K562 (cell line): ENCODE measurements at regions of chrX and their contacts with region 1.

Region 1: DNA sequence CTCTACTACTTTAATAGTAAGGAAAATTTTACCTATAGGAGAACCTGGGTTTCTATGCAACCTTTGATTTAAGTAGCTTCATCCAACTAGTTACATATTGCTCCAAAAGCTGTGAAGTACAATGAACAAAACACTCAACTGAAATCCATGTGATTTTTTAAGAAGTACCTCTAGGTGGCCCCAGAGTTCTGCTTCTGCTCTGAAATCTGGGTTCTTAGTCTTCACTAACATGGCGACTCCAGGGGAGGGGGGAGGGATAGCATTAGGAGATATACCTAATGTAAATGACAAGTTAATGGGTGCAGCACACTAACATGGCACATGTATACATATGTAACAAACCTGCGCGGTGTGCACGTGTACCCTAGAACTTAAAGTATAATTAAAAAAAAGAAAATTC is 73.4 kb upstream of the MAGEB2 start:
- DNase-seq: peak; percentile 31 to 55 (median 35)
- ATAC-seq: peak; percentile 84
- H3K4me3 ChIP-seq: no peak overlapping the region
- H3K27ac ChIP-seq: no peak overlapping the region
- H3K4me1 ChIP-seq: peaks cover 0 to 4% of the 10 kb centered on the region in 2 experiments; a peak in 1 of 5 replicates
- H3K27me3 ChIP-seq: no peaks in the 10 kb centered on the region
- CTCF ChIP-seq: peak; percentile 25 to 60 (median 51); a peak in 4 of 6 replicates
- EP300 ChIP-seq: no peak
- POLR2A ChIP-seq: no peak
- RAD21 ChIP-seq: peak; percentile 58 to 71

Region 2: GRCh38 chrX:30181353-30181752 is 39.4 kb after region 1 on chrX:
- CTCF ChIA-PET with region 1: no interaction called
- POLR2A ChIA-PET with region 1: no interaction called
- in situ Hi-C with region 1: no loop called
- intact Hi-C with region 1: no loop called
- DNase-seq: no peak
- ATAC-seq: no peak
- H3K4me3 ChIP-seq: no peak overlapping the region
- H3K27ac ChIP-seq: no peak overlapping the region
- H3K4me1 ChIP-seq: no peaks in the 10 kb centered on the region
- H3K27me3 ChIP-seq: no peaks in the 10 kb centered on the region; a peak in 1 of 5 replicates
- CTCF ChIP-seq: no peak
- EP300 ChIP-seq: no peak
- POLR2A ChIP-seq: no peak
- RAD21 ChIP-seq: no peak

Region 3: GRCh38 chrX:30196322-30196721 is 54.4 kb after region 1 on chrX:
- CTCF ChIA-PET with region 1: no interaction called
- POLR2A ChIA-PET with region 1: no interaction called
- in situ Hi-C with region 1: no loop called
- intact Hi-C with region 1: loop called (anchors 2 kb)
- DNase-seq: peak; percentile 17 to 49 (median 40)
- ATAC-seq: peak; percentile 73
- H3K4me3 ChIP-seq: no peak overlapping the region
- H3K27ac ChIP-seq: no peak overlapping the region
- H3K4me1 ChIP-seq: no peaks in the 10 kb centered on the region
- H3K27me3 ChIP-seq: no peaks in the 10 kb centered on the region
- CTCF ChIP-seq: peak in 2 of 3 experiments; percentile 4 to 43; a peak in 3 of 6 replicates
- EP300 ChIP-seq: no peak
- POLR2A ChIP-seq: no peak
- RAD21 ChIP-seq: no peak; a peak in 1 of 4 replicates

Region 4: DNA sequence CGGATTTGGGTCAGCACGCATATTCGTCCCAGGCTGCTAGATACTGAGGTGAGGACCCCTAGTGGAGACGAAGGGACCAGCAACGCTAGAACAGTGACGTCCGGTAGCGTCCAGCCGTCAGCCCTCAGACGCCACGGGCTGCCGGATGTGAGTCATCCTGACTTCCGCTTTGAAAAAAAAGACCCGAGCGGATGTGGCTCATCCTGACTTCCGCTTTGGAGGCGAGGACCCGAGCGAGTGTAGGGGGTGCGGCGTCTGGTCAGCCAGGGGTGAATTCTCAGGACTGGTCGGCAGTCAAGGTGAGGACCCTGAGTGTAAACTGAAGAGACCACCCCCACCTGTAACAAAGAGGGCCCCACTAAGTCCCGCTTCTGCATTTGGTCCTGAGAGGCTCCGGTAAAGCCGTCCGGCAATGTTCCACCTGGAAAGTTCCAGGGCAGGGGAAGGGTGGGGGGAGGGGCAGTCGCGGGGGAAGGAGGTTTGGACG is 73.4 kb after region 1 on chrX and contains the start of gene MAGEB2:
- CTCF ChIA-PET with region 1: no interaction called
- POLR2A ChIA-PET with region 1: no interaction called
- in situ Hi-C with region 1: no loop called
- intact Hi-C with region 1: loop called (anchors 5 kb)
- DNase-seq: peak; percentile 84 to 89 (median 84)
- ATAC-seq: peak; percentile 97
- H3K4me3 ChIP-seq: peak within 1 kb of the TSS; percentile 57
- H3K27ac ChIP-seq: peak within 1 kb of the TSS; percentile 92
- H3K4me1 ChIP-seq: peaks cover 8 to 12% of the 10 kb centered on the region in 2 experiments
- H3K27me3 ChIP-seq: no peaks in the 10 kb centered on the region
- CTCF ChIP-seq: peak; percentile 61 to 81 (median 71)
- EP300 ChIP-seq: no peak
- POLR2A ChIP-seq: peak; percentile 74
- RAD21 ChIP-seq: peak; percentile 28 to 35; a peak in 2 of 4 replicates
- polyA plus RNA-seq, gene MAGEB2: 235 to 277 TPM

Region 5: DNA sequence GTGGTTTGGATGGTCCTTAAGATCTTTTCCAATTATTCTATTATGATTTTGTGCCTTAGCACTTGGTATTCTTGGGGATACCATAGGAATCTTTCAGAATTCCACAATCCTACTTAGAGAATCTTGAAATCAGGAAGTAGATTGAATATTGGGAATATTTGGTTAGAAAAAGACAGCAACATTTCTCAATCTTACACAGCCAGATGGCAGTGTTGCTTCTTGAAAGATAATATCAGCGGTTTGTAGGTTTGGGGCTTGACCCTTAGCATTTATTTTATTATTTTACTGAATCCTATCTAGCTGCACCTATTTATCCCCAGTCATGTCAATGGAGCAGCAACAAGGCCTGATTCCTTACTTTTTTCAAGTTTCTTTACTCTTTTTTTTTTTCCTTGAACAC is 133.5 kb after region 1 on chrX:
- CTCF ChIA-PET with region 1: no interaction called
- POLR2A ChIA-PET with region 1: no interaction called
- in situ Hi-C with region 1: no loop called
- intact Hi-C with region 1: loop called (anchors 10 kb)
- DNase-seq: peak in 2 of 4 experiments; percentile 10 to 20
- ATAC-seq: peak; percentile 53; the same call in 2 of the 3 replicates
- H3K4me3 ChIP-seq: no peak overlapping the region
- H3K27ac ChIP-seq: no peak overlapping the region
- H3K4me1 ChIP-seq: no peaks in the 10 kb centered on the region
- H3K27me3 ChIP-seq: no peaks in the 10 kb centered on the region
- CTCF ChIP-seq: peak in 2 of 3 experiments; percentile 20 to 67; a peak in 3 of 6 replicates
- EP300 ChIP-seq: no peak
- POLR2A ChIP-seq: no peak
- RAD21 ChIP-seq: peak; percentile 65 to 79

Region 6: DNA sequence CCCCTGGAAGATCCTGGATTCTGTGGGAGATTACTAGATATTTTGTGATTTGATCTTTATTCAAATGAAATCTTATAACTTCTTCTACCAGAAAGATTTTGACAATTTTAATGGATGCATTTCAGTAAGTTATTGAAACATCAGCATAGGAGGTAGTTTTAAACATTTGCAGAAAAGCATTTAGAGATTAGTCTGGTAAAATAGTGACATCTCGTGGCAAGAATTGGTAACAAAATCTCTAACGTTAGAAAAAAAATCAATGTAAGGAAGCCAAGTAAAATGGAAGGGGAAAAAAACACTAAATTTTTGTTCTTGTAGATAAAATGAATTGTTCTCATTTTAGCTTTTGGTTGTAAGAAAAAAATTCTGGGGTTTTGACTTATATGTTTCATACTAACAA is 362.3 kb after region 1 on chrX:
- CTCF ChIA-PET with region 1: interaction called, 5 read pairs
- POLR2A ChIA-PET with region 1: no interaction called
- in situ Hi-C with region 1: loop called (anchors 10 kb)
- intact Hi-C with region 1: loop called (anchors 1 kb)
- DNase-seq: peak; percentile 3 to 22 (median 10)
- ATAC-seq: no peak
- H3K4me3 ChIP-seq: no peak overlapping the region
- H3K27ac ChIP-seq: no peak overlapping the region
- H3K4me1 ChIP-seq: no peaks in the 10 kb centered on the region
- H3K27me3 ChIP-seq: no peaks in the 10 kb centered on the region
- CTCF ChIP-seq: peak in 2 of 3 experiments; percentile 25 to 59; a peak in 3 of 6 replicates
- EP300 ChIP-seq: no peak
- POLR2A ChIP-seq: no peak
- RAD21 ChIP-seq: peak; percentile 77 to 78